Sciatic nerve (tissue), 2 donors: ENCODE measurements at regions of chr2 and their contacts with region 1.

Region 1: GRCh38 chr2:14454202-14454601 is 178.3 kb upstream of the LRATD1 start:
- DNase-seq: no peak
- ATAC-seq: no peak

Region 2: DNA sequence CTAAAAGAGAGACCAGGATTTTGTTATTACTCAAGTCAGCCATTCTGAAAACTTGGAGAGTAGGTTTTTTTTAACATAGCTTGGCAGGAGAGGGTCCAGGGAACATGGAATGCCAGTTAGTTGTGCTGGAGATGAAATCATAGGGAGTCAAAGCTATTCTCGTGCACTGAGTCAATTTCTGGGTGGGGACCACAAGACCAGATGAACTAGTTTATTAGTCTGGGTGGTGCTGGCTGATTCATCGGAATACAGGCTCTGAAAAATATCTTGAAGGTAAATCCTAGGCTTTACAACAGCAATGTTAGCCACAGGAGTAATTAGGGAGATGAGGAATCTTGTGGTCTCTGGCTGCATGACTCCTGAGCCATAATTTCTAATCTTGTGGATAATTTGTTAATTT is 816.0 kb before region 1 on chr2:
- intact Hi-C with region 1: no loop called
- DNase-seq: no peak
- ATAC-seq: no peak

Region 3: DNA sequence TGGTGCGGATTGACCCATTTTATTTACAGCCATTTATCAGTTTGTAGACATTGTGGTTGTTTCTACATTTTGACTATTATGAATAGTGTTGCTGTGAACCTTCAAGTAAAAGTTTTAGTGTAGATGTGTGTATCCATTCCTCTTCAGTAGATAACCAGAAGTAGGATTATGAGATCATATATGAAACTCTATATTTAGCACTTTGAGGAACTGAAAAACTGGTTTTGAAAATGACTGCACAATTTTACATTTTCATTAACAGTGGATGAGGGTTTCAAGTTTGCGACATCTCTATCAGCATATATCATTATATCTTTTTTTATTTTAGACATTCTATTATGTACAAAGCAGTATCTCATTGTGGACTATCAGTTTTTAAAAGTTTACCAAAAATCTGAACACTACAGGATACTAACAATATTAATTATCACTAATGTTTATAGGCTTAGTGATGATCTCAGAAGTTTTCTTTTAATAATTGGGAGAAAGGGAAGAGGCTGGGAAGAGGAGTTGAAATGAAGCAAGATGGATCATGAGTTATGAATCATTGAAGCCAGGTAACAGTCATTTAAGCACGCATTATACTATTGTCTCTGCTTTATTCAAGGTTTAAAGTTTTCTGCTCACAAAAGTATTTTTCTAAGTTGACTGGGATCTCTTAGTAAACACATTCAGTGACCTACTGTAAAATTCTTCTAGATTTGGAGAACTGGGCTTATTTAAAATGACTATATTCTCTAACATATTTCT is 150.7 kb before region 1 on chr2:
- intact Hi-C with region 1: no loop called
- DNase-seq: no peak
- ATAC-seq: no peak

Region 4: DNA sequence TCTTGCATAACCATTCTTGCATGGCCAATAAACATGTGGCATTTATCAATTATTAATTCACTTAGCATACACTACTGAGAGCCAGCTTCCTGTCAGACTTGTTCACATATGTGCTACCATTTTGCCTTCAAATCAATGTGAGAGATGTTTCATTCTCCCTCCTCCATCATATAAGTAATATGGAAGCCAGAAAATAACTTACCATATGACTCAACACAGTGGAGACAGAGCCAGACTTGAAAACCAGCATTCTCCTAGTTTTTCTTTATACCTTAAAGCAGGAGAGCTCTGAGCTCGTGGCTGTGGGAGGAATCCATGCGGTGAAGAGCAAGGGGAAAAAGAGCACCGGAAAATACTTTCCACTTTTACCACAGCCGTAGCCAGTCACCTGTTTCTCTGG is 36.7 kb before region 1 on chr2:
- intact Hi-C with region 1: no loop called
- DNase-seq: no peak
- ATAC-seq: no peak

Region 5: DNA sequence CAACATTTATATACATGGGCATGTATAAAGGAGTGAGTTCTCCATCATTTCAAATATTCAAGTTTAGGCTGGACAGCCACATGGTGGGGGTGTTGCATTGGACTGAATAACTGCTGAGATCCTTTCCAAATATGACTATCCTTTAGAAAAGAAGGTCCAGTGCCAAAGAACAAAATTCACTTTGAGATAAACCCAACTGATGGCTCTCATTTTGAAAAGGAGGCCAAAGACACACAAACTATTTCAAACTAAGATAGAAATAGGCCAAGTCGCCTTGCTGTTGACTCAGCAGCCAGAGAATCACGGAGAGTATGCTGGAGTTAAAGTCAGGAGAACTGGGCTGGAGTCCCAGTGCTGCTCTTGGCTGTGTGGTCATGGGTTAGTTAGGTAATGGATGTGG is 26.1 kb before region 1 on chr2:
- intact Hi-C with region 1: loop called (anchors 1 kb)
- DNase-seq: no peak
- ATAC-seq: peak; percentile 95

Region 6: DNA sequence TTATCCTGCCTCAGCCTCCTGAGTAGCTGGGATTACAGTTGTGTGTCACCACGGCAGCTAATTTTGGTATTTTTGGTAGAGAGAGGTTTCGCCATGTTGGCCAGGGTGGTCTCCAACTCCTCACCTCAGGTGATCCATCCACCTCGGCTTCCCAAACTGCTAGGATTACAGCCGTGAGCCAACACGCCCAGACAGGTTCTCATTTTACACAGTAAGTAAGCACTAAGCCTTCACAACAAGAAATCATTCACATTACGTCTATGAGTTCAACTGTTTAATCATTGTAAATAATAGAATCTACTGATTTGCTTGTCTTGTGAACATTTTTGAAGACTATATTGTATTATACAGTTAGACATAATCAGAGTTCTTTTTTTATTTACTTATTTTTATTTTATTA is 46.9 kb after region 1 on chr2:
- intact Hi-C with region 1: no loop called
- DNase-seq: no peak
- ATAC-seq: no peak